Aorta (tissue), 5 donors: ENCODE measurements at regions of chr3 and their contacts with region 1.

Region 1: DNA sequence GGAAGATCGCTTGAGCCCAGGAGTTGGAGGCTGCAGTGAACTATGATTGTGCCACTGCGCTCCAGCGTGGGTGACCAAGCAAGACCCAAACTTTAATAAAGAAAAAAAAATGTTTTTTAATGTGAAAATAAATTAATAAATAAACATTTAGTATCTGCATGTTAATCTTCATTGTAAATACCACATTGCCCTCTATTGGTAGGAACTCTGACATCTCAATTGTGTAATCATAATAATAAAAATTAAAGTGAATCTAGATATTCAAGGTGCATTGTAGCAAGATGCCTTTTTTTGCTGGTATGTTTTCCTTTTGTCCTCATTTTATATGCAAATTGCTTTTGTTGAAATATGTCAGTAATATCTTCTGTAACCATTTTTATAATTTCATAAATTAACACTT is 95.0 kb upstream of the LIMD1 start:
- DNase-seq: no peak
- ATAC-seq: no peak
- H3K4me3 ChIP-seq: no peak overlapping the region
- H3K27ac ChIP-seq: no peak overlapping the region
- H3K4me1 ChIP-seq: peaks cover 0 to 6% of the 10 kb centered on the region in 2 donors
- H3K27me3 ChIP-seq: no peaks in the 10 kb centered on the region

Region 2: GRCh38 chr3:45224824-45225464 is 274.6 kb before region 1 on chr3:
- intact Hi-C with region 1: loop called (anchors 5 to 10 kb)
- DNase-seq: peak; percentile 86 to 88
- ATAC-seq: peak; percentile 69
- H3K4me3 ChIP-seq: peak overlapping the region; percentile 59 to 96
- H3K27ac ChIP-seq: no peak overlapping the region
- H3K4me1 ChIP-seq: no peaks in the 10 kb centered on the region
- H3K27me3 ChIP-seq: no peaks in the 10 kb centered on the region

Region 3: GRCh38 chr3:45355351-45355750 is 144.2 kb before region 1 on chr3:
- intact Hi-C with region 1: no loop called
- DNase-seq: no peak
- ATAC-seq: no peak
- H3K4me3 ChIP-seq: no peak overlapping the region
- H3K27ac ChIP-seq: no peak overlapping the region
- H3K4me1 ChIP-seq: no peaks in the 10 kb centered on the region
- H3K27me3 ChIP-seq: peaks cover 0 to 4% of the 10 kb centered on the region in 2 donors

Region 4: GRCh38 chr3:45368382-45368781 is 131.1 kb before region 1 on chr3:
- intact Hi-C with region 1: no loop called
- DNase-seq: no peak
- ATAC-seq: no peak
- H3K4me3 ChIP-seq: no peak overlapping the region
- H3K27ac ChIP-seq: no peak overlapping the region
- H3K4me1 ChIP-seq: no peaks in the 10 kb centered on the region
- H3K27me3 ChIP-seq: no peaks in the 10 kb centered on the region

Region 5: DNA sequence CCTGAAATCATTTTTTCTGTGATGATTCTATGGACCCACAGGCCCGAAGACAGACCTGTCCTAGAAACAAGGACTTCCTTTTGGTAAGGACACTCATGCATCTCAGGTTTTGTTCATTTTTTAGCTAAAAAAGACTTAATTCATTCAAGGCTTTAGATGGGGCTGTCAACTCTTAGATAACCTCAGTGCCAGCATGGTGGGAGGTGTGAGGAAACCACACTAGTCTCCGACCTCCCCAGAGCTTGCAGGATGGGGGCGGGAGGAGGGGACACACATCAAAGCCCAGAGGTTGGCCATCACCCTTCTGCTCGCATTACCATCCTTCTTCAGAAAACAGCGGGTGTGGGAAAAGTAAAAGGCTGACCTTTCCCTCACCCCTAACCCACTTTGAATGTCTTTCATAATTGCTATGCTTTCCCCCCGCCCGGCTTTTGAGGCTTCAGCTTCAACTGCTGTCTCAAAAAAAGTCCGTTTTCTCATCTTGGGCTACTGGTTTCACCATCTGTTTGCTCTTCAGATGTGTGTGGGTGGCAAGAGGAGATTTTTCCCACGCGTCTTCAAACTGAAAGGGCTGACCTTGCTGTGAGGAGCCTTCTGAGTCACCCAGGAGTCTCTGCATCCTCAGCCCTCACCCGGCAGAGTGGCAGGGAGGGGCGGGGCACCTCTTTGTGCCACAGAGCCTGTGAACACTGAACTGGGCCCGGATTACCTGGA is 416.1 kb after region 1 on chr3:
- intact Hi-C with region 1: no loop called
- DNase-seq: no peak
- ATAC-seq: no peak
- H3K4me3 ChIP-seq: no peak overlapping the region
- H3K27ac ChIP-seq: no peak overlapping the region
- H3K4me1 ChIP-seq: no peaks in the 10 kb centered on the region
- H3K27me3 ChIP-seq: no peaks in the 10 kb centered on the region